CD4-positive, alpha-beta T cell (primary cell): ENCODE measurements at regions of chr10 and their contacts with region 1.

Region 1: GRCh38 chr10:22316285-22317120 is at the start of gene COMMD3:
- DNase-seq: peak; percentile 59 to 94 (median 74)
- ATAC-seq: peak; percentile 55
- H3K4me3 ChIP-seq: peak within 1 kb of the TSS; percentile 82
- H3K4me3 Mint-ChIP-seq: peak within 1 kb of the TSS; percentile 95
- H3K27ac ChIP-seq: peak within 1 kb of the TSS; percentile 71 to 74
- H3K27ac Mint-ChIP-seq: peak within 1 kb of the TSS; percentile 90
- H3K4me1 ChIP-seq: peaks cover 17% of the 10 kb centered on the region
- H3K4me1 Mint-ChIP-seq: peaks cover 42% of the 10 kb centered on the region
- H3K27me3 ChIP-seq: peaks cover 0 to 5% of the 10 kb centered on the region in 2 experiments
- H3K27me3 Mint-ChIP-seq: peaks cover 26% of the 10 kb centered on the region
- CTCF ChIP-seq: no peak
- total RNA-seq, gene COMMD3: 43.2 to 51.0 TPM

Region 2: GRCh38 chr10:21533467-21534279 is 782.8 kb before region 1 on chr10 and contains the start of gene MLLT10:
- CTCF ChIA-PET with region 1: no interaction called
- POLR2A ChIA-PET with region 1: no interaction called
- intact Hi-C with region 1: loop called (anchors 2 to 5 kb)
- DNase-seq: peak; percentile 81 to 98 (median 92)
- ATAC-seq: peak; percentile 83
- H3K4me3 ChIP-seq: peak within 1 kb of the TSS; percentile 85
- H3K4me3 Mint-ChIP-seq: peak within 1 kb of the TSS; percentile 96
- H3K27ac ChIP-seq: peak within 1 kb of the TSS; percentile 81 to 83
- H3K27ac Mint-ChIP-seq: peak within 1 kb of the TSS; percentile 90
- H3K4me1 ChIP-seq: peaks cover 19% of the 10 kb centered on the region
- H3K4me1 Mint-ChIP-seq: peaks cover 29% of the 10 kb centered on the region
- H3K27me3 ChIP-seq: no peaks in the 10 kb centered on the region
- H3K27me3 Mint-ChIP-seq: no peaks in the 10 kb centered on the region
- CTCF ChIP-seq: peak; percentile 30
- total RNA-seq, gene MLLT10: 46.0 to 64.1 TPM

Region 3: DNA sequence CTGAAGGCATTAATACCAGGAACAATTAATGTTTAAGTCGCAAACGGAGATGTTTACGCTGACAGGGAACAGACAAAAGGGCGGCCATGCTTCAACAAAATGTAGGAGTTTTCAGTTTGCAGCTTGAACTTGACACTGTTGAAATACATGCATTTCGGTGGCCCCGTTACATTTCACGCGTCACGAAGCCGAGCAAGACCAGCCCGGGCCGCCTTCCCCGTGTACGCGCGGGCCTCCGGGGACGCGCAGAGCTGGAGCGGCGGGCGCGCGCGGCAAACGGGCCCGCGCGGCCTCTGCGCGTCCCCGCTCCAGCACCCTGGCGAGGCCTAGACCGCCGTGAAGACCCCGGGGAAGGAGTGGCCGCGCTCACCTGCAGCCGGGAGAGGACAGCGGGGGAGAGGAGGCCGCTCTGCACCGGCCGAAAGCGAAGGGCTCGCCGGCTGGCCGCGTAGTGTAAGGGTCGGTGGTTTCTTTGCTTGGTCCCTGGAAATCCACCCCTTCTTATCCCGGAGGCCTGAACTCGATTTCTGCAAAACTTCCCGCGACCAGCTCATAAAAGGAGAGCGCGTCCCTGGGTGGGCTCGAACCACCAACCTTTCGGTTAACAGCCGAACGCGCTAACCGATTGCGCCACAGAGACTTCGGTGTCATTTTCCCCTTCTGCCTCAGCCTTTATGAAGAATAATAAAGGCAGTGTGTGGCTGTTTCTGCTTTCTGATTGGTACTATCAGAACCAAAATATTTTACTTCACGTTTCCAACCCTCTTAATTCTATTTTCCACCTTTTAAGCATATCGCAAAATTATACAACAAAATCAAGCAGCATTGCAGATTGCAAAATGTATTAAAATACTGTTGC is 87.3 kb before region 1 on chr10:
- CTCF ChIA-PET with region 1: interaction called, 3 read pairs
- POLR2A ChIA-PET with region 1: interaction called, 94 read pairs
- intact Hi-C with region 1: loop called (anchors 1 kb)
- DNase-seq: peak; percentile 72 to 93 (median 82)
- ATAC-seq: peak; percentile 77
- H3K4me3 ChIP-seq: peak overlapping the region; percentile 62
- H3K4me3 Mint-ChIP-seq: peak overlapping the region; percentile 92
- H3K27ac ChIP-seq: peak overlapping the region; percentile 25 to 53
- H3K27ac Mint-ChIP-seq: peak overlapping the region; percentile 99
- H3K4me1 ChIP-seq: peaks cover 3% of the 10 kb centered on the region
- H3K4me1 Mint-ChIP-seq: peaks cover 19% of the 10 kb centered on the region
- H3K27me3 ChIP-seq: no peaks in the 10 kb centered on the region
- H3K27me3 Mint-ChIP-seq: peaks cover 11% of the 10 kb centered on the region
- CTCF ChIP-seq: no peak

Region 4: DNA sequence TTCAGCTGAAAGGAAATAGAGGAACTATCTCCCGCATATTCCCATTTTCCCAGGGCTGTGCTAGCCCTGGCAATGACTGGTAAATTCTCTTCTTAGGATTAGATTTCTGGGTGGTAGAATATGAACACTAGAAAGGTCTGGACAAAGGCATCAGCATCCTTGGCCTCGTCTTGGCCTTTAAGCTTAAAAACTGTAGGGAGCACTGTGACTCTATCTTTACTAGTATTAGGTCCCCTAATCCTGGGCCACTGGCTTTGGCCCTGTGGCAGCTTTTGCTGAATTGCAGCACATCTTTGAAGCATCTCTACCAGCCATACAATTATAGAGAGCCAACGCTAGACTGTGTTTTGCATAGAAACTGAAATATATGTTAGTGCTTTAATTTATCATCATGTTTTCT is 57.2 kb before region 1 on chr10:
- CTCF ChIA-PET with region 1: interaction called, 3 read pairs
- POLR2A ChIA-PET with region 1: interaction called, 46 read pairs
- intact Hi-C with region 1: loop called (anchors 5 kb)
- DNase-seq: peak in 5 of 14 experiments; percentile 4 to 54 (median 37)
- ATAC-seq: peak; percentile 60
- H3K4me3 ChIP-seq: no peak overlapping the region
- H3K4me3 Mint-ChIP-seq: no peak overlapping the region
- H3K27ac ChIP-seq: no peak overlapping the region
- H3K27ac Mint-ChIP-seq: no peak overlapping the region
- H3K4me1 ChIP-seq: no peaks in the 10 kb centered on the region
- H3K4me1 Mint-ChIP-seq: peaks cover 38% of the 10 kb centered on the region
- H3K27me3 ChIP-seq: no peaks in the 10 kb centered on the region
- H3K27me3 Mint-ChIP-seq: peaks cover 34% of the 10 kb centered on the region
- CTCF ChIP-seq: no peak

Region 5: GRCh38 chr10:22340362-22341189 is 24.1 kb after region 1 on chr10:
- CTCF ChIA-PET with region 1: no interaction called
- POLR2A ChIA-PET with region 1: interaction called, 12 read pairs
- intact Hi-C with region 1: loop called in 1 of 2 experiments (anchors 2 kb)
- DNase-seq: peak in 10 of 14 experiments; percentile 12 to 78 (median 49)
- ATAC-seq: peak; percentile 37
- H3K4me3 ChIP-seq: peak overlapping the region; percentile 67
- H3K4me3 Mint-ChIP-seq: peak overlapping the region; percentile 91
- H3K27ac ChIP-seq: no peak overlapping the region
- H3K27ac Mint-ChIP-seq: peak overlapping the region; percentile 89
- H3K4me1 ChIP-seq: peaks cover 38% of the 10 kb centered on the region
- H3K4me1 Mint-ChIP-seq: peaks cover 38% of the 10 kb centered on the region
- H3K27me3 ChIP-seq: peaks cover 61 to 98% of the 10 kb centered on the region in 2 experiments
- H3K27me3 Mint-ChIP-seq: peaks cover 86% of the 10 kb centered on the region
- CTCF ChIP-seq: no peak